ENCODE measurements at regions of chr13 and their contacts with region 1.

Region 1: GRCh38 chr13:73792796-73793195 is 341.4 kb downstream of the KLF12 start:
- DNase-seq: no peak
- ATAC-seq: no peak
- H3K4me3 ChIP-seq: no peak overlapping the region
- H3K27ac ChIP-seq: no peak overlapping the region
- H3K4me1 ChIP-seq: no peaks in the 10 kb centered on the region
- H3K27me3 ChIP-seq: no peaks in the 10 kb centered on the region
- CTCF ChIP-seq: no peak
- POLR2A ChIP-seq: no peak
- RAD21 ChIP-seq: no peak

Region 2: GRCh38 chr13:73779881-73780280 is 12.9 kb before region 1 on chr13:
- CTCF ChIA-PET with region 1: no interaction called
- POLR2A ChIA-PET with region 1: no interaction called
- dilution Hi-C with region 1: no loop called
- in situ Hi-C with region 1: no loop called
- intact Hi-C with region 1: loop called (anchors 1 kb)
- DNase-seq: peak; percentile 53
- ATAC-seq: peak; percentile 40
- H3K4me3 ChIP-seq: no peak overlapping the region
- H3K27ac ChIP-seq: no peak overlapping the region
- H3K4me1 ChIP-seq: peaks cover 11% of the 10 kb centered on the region
- H3K27me3 ChIP-seq: no peaks in the 10 kb centered on the region
- CTCF ChIP-seq: no peak
- POLR2A ChIP-seq: no peak
- RAD21 ChIP-seq: no peak

Region 3: GRCh38 chr13:73832128-73832588 is 39.4 kb after region 1 on chr13:
- CTCF ChIA-PET with region 1: no interaction called
- POLR2A ChIA-PET with region 1: no interaction called
- dilution Hi-C with region 1: no loop called
- in situ Hi-C with region 1: no loop called
- intact Hi-C with region 1: no loop called
- DNase-seq: no peak
- ATAC-seq: no peak
- H3K4me3 ChIP-seq: no peak overlapping the region
- H3K27ac ChIP-seq: no peak overlapping the region
- H3K4me1 ChIP-seq: peaks cover 6% of the 10 kb centered on the region
- H3K27me3 ChIP-seq: no peaks in the 10 kb centered on the region
- CTCF ChIP-seq: no peak
- POLR2A ChIP-seq: no peak
- RAD21 ChIP-seq: no peak

Region 4: DNA sequence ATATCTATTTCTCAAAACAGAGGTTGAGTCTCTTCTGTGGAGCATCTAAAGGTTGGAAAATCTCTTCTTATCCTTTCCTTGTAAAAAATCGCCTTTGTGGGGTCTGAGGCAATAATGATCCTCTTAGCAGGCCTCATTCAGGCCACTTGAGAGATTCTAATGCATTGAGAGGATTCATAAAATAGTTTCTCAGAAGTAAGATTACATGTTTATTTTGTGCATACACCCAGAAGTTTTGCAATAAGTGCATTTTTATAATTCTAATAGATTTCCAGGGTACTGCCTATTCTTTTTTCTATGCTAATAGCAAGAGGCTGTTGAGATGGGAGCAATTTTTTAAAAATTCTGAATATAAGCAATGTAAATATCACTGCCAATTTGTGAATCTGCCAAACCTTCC is 683.6 kb after region 1 on chr13:
- CTCF ChIA-PET with region 1: no interaction called
- POLR2A ChIA-PET with region 1: no interaction called
- dilution Hi-C with region 1: no loop called
- in situ Hi-C with region 1: no loop called
- intact Hi-C with region 1: no loop called
- DNase-seq: no peak
- ATAC-seq: no peak
- H3K4me3 ChIP-seq: no peak overlapping the region
- H3K27ac ChIP-seq: no peak overlapping the region
- H3K4me1 ChIP-seq: no peaks in the 10 kb centered on the region
- H3K27me3 ChIP-seq: no peaks in the 10 kb centered on the region
- CTCF ChIP-seq: no peak
- POLR2A ChIP-seq: no peak
- RAD21 ChIP-seq: no peak